ENCODE measurements at regions of chr15 and their contacts with region 1.

Region 1: DNA sequence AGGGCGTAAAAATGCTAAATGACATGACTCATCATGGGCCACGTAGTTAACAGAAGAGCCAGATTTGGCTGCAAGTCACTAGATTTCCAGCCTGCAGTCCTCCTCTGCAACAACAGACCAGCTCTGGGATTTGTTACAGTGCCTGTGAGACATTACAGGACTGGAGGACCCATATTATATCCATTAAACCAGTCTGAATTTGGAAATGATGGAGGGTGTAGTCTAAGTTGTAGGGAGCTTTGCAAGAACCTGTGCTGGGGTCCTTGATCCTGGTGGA is 10.8 kb downstream of the ZNF774 start:
- DNase-seq: no peak
- ATAC-seq: peak in 1 of 2 experiments; percentile 44; a peak in 3 of 6 replicates
- H3K4me3 ChIP-seq: no peak overlapping the region
- H3K27ac ChIP-seq: peak overlapping the region; percentile 31 to 73; a peak in 5 of 6 replicates
- H3K4me1 ChIP-seq: peaks cover 39% of the 10 kb centered on the region
- CTCF ChIP-seq: no peak
- EP300 ChIP-seq: no peak
- POLR2A ChIP-seq: no peak
- RAD21 ChIP-seq: no peak

Region 2: GRCh38 chr15:89472785-89473256 is 890.1 kb before region 1 on chr15:
- CTCF ChIA-PET with region 1: no interaction called
- POLR2A ChIA-PET with region 1: no interaction called
- DNase-seq: peak; percentile 78 to 88
- ATAC-seq: peak; percentile 74 to 95
- H3K4me3 ChIP-seq: no peak overlapping the region
- H3K27ac ChIP-seq: no peak overlapping the region
- H3K4me1 ChIP-seq: peaks cover 4% of the 10 kb centered on the region; the same call in 1 of the 3 replicates
- CTCF ChIP-seq: peak; percentile 94
- EP300 ChIP-seq: no peak
- POLR2A ChIP-seq: no peak
- RAD21 ChIP-seq: peak; percentile 92 to 96

Region 3: DNA sequence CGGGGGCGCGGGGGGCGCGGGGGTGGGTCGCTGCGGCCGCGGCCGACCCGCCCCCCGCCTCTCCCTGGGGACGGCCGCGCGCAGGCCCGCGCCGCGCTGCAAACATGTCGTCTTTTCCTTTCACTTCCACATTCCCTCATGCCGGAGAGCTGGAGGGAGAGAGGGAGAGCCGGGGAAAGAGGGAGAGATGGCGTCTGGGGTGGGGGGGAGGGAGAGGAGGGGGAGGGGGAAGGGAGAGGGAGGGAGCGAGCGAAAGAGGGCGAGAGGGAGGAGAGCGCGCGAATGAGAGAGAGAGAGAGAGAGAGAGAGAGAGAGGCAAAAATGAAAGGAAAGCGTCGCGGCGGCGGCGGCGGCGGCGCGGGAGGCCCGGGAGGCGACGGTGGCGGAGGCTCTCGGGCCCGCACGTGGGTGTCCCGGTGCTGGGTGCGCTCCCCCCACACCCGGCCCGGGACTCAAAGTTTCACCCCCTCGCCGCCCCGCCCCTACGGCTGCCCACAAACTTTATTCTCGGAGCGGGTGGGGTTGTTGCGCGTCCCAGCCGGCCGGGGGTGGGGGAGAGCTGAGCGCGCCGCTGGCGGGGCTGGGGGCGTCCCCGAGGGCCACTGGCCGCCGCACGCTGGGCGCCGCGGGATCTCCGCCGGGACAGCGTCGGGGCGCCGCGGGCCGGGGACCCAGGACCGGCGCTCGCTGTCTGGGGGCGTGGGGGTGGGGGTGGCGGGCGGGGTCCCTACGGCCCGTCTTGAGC is 361.0 kb before region 1 on chr15:
- CTCF ChIA-PET with region 1: no interaction called
- POLR2A ChIA-PET with region 1: no interaction called
- DNase-seq: peak; percentile 67 to 75
- ATAC-seq: peak; percentile 11 to 37
- H3K4me3 ChIP-seq: peak overlapping the region; percentile 85
- H3K27ac ChIP-seq: peak overlapping the region; percentile 93 to 97
- H3K4me1 ChIP-seq: peaks cover 66% of the 10 kb centered on the region
- CTCF ChIP-seq: no peak
- EP300 ChIP-seq: no peak
- POLR2A ChIP-seq: no peak
- RAD21 ChIP-seq: no peak

Region 4: DNA sequence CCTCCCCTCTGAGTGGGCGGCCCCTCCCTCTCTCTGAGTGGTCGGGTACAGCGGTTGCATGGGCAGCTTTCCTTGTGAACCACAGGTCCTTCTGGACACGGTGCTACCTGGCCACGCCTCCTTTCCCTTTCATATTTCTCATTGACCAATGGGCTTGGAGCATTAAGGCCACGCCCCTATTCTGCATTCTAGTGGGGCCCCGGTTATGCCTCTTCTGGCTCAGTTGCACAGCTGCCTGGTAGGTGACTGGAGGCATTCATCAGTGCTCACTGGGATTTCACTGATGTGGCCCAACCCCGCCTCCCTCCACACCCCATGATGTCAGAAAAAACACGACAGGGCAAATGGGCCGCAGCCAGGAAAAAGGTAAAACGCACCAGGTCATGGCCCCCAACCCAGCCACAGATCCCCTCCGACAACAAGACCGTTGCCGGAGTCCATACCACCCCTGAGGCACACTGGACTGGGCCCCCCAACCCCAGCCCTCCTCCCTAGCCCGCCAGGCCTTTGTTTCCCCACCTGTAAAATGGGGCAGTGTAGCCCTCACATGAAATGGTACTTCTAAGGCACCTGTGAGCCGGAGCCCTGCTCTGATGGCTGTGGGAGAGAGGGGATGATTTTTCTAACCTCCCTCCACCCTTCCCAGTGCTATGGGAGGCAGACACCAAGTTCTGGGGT is 71.1 kb before region 1 on chr15:
- CTCF ChIA-PET with region 1: interaction called, 11 read pairs
- POLR2A ChIA-PET with region 1: no interaction called
- DNase-seq: peak; percentile 62 to 71
- ATAC-seq: peak; percentile 32 to 66; a peak in 3 of 6 replicates
- H3K4me3 ChIP-seq: no peak overlapping the region
- H3K27ac ChIP-seq: no peak overlapping the region
- H3K4me1 ChIP-seq: no peaks in the 10 kb centered on the region
- CTCF ChIP-seq: no peak
- EP300 ChIP-seq: no peak; a peak in 1 of 5 replicates
- POLR2A ChIP-seq: no peak
- RAD21 ChIP-seq: no peak

Region 5: DNA sequence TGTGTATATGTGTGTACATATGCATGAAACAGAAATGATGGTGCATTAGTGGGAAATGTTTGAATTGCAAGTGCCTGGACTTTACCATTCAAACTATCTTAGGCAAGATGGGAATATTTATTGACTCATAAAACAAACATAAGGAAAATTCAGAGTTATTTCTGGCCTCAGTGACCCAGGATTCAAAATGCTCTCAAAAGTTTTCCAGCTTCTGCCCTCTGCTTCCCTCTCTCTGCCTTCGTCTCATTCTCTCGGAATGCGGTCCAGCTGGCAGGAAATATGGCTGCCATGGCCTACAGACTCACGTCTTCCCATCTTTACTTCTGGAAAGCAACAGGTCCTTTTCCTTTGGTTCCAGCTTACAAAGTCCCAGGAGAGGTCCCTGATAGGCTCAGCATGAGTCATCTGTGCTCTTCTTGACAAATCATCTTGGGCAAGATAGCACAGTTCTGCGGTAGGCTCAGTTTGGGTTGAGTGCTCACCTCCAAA is 19.5 kb before region 1 on chr15:
- CTCF ChIA-PET with region 1: interaction called, 34 read pairs
- POLR2A ChIA-PET with region 1: no interaction called
- DNase-seq: peak in 1 of 2 experiments; percentile 43
- ATAC-seq: peak; percentile 41 to 62; a peak in 4 of 6 replicates
- H3K4me3 ChIP-seq: no peak overlapping the region
- H3K27ac ChIP-seq: no peak overlapping the region
- H3K4me1 ChIP-seq: peaks cover 13% of the 10 kb centered on the region
- CTCF ChIP-seq: no peak
- EP300 ChIP-seq: no peak
- POLR2A ChIP-seq: no peak
- RAD21 ChIP-seq: no peak

Region 6: DNA sequence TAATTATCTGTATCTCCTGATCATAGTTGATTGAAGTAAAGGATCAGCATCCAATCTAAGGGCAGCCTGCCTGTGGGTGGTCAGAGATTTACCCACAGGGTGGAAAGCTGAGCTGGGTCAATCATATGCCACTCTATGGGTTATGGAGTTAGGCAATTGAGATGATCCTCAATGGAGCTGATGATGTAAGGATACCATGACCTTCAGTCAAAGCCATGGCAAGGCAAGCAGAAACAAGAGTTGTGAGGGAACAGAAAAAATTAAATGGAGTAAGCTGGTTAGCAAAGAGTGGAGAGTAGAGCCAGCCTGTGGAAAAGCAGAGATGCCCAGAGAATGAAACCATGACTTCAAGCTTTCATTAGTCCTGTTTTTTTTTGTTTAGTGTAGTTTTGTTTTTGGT is 19.4 kb after region 1 on chr15:
- CTCF ChIA-PET with region 1: interaction called, 41 read pairs
- POLR2A ChIA-PET with region 1: no interaction called
- DNase-seq: no peak
- ATAC-seq: no peak
- H3K4me3 ChIP-seq: no peak overlapping the region
- H3K27ac ChIP-seq: no peak overlapping the region
- H3K4me1 ChIP-seq: no peaks in the 10 kb centered on the region
- CTCF ChIP-seq: no peak
- EP300 ChIP-seq: no peak
- POLR2A ChIP-seq: no peak
- RAD21 ChIP-seq: no peak

Region 7: DNA sequence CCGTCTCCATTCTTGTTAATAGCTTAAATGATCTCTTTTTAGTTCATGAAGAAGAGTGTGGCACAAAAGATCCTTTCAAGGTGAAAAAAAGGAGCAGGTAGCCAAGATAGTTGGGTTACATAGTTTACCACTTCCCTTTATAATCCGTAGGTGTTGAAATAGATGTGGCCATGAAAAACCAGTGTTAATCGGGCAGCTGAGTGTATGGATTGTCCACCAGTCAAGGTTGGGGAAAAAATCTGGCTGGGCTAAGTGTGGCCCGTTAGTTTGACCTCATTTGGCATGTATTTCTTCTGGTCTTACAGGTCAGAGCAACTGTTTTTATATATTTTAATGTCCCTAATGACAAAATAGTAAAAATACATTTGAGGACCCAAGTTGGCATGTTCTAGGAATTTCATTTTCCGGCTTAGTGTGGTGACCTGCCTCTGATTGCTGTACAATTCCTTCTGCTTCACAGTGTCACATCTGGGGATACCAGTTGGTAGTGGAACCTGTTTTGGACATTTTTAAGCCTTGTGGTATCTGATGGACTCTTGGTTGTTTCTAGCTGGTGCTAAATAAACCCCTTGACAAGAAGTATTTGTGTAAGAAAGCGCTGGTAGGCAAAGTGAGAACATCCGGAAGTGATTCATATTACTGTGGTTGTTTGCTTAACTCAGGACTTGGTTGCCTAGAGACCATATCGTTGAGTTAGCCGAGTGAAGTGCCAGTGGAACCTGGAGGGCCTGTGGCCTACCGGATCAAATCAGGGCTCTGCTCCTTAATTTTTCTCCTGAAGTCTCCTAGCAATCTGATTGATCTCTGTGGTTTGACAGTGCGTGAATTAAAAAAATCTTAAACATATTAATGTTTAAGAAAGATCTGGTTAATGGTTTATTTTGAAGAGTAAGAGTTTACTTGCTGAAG is 37.8 kb after region 1 on chr15:
- CTCF ChIA-PET with region 1: interaction called, 13 read pairs
- POLR2A ChIA-PET with region 1: no interaction called
- DNase-seq: peak; percentile 94
- ATAC-seq: peak; percentile 97 to 98
- H3K4me3 ChIP-seq: peak overlapping the region; percentile 25; the same call in 2 of the 3 replicates
- H3K27ac ChIP-seq: peak overlapping the region; percentile 76 to 84
- H3K4me1 ChIP-seq: peaks cover 63% of the 10 kb centered on the region
- CTCF ChIP-seq: no peak
- EP300 ChIP-seq: no peak
- POLR2A ChIP-seq: no peak
- RAD21 ChIP-seq: 0 out of 5 replicates have a peak, but pooled peaks of 1 of the 2 experiments have one; percentile 18